GM13977 (cell line): ENCODE measurements at regions of chr1 and their contacts with region 1.

Region 1: GRCh38 chr1:167060141-167061072 is 29.8 kb downstream of the GPA33 start:
- DNase-seq: no peak
- CTCF ChIP-seq: no peak

Region 2: GRCh38 chr1:166910396-166910994 is 149.9 kb before region 1 on chr1:
- in situ Hi-C with region 1: loop called (anchors 5 kb)
- DNase-seq: peak; percentile 80
- CTCF ChIP-seq: peak; percentile 73

Region 3: GRCh38 chr1:166999500-167000055 is 60.8 kb before region 1 on chr1:
- in situ Hi-C with region 1: no loop called
- DNase-seq: no peak
- CTCF ChIP-seq: no peak